Endothelial cell of umbilical vein (primary cell): ENCODE measurements at regions of chr22 and their contacts with region 1.

Region 1: DNA sequence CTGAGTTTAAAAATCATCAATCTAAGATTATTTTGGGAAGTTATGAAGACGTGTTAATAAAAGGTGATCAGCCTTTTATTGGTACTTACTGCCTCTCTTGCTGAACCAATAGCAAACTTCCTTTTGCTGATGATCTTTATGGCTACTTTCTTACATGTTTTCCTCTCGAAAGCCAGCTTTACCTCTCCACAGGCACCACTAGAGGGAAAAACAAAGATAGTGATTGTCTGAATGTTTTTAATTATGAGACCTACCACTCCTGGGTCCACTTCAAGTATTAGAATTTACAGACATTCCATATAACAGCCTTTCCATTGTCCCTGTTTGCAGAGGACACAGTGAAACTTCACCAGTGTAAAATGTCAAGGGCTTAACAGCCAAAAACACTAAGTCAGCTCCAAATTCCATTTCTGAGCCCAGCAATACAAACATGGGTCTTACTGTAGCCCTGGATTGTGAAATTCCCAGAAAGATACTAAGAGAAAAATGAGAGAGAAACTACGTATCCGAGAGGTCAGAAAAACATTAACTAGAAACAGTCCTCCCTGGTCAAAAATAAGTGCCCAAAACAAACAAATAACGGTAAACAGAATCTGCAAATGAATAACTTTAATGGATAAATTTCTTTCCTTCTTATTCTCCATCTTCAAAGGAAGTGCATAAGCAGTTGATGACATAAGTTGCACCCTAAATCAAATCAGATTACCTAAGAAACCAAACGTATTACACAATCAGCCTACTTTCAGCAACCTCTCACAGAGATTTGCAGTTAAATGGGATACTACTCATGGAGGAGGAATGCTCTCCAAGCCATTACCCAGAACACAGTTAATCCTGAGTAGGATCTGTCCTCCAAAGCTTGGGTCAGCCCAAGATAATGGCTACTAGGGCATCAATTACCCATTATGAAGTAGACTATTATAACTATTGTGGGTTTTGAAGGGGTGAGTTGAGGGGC is 29.5 kb downstream of the CHEK2 start:
- DNase-seq: peak; percentile 55
- H3K4me3 ChIP-seq: no peak overlapping the region
- H3K27ac ChIP-seq: peak overlapping the region; percentile 96
- H3K4me1 ChIP-seq: peaks cover 35% of the 10 kb centered on the region
- H3K27me3 ChIP-seq: no peaks in the 10 kb centered on the region
- CTCF ChIP-seq: no peak
- POLR2A ChIP-seq: no peak

Region 2: DNA sequence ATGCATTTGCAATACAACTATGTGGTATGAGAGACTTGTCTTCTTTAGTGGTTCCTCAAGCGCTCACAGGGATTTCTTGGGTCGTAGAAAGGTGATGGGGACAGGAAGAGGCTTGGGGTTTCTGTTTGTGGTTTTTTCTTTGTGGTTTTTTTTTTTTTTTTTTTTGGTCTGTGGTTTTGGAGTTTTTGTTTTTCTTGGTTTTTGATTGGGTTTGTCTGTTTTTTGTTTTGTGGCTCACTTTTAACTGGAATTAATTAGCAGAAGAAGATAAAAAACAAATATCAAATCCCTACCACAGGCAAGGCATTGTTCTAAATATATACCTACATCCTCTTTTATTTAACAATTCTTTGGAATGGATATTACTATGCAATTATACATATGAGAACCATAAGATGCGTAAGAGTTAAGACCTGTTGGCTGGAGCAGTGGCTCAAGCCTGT is 38.0 kb before region 1 on chr22:
- CTCF ChIA-PET with region 1: interaction called, 4 read pairs
- POLR2A ChIA-PET with region 1: no interaction called
- dilution Hi-C with region 1: no loop called
- intact Hi-C with region 1: loop called (anchors 1 kb)
- DNase-seq: no peak
- H3K4me3 ChIP-seq: no peak overlapping the region
- H3K27ac ChIP-seq: no peak overlapping the region
- H3K4me1 ChIP-seq: peaks cover 2% of the 10 kb centered on the region
- H3K27me3 ChIP-seq: no peaks in the 10 kb centered on the region
- CTCF ChIP-seq: no peak
- POLR2A ChIP-seq: no peak

Region 3: DNA sequence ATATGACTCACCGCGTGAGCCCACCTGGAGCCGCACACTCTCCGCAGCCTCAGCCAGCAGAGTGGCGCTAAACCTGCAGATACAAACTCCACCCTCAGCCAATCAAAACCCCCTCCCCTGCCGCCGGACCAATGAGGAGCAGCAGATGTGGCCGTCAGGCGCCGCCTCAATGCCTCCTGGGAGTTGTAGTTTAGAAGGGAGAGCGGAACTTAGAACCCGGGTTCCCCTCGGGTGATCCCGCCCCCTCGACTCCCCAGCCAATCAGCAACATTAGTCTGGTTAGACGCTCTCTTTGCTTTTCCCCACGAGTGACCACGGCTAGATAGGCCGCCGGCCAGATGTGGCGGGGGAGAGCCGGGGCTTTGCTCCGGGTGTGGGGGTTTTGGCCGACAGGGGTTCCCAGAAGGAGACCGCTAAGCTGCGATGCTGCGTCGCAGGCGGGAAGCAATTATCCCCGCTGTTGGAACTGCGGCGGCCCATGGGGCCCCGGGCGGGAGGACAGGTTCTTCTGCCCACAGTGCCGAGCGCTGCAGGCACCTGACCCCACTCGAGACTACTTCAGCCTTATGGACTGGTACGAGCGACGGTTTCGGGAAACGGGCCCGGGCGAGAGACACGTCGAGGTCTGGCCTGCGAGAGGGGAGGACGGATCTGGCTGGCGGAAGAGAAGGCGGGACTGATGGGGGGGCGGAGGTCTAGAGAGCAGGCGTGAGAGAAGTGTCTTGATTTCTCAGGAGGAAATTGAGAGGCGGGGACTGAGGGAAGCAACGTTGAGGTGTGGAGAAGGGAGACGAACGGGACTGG is 29.9 kb after region 1 on chr22 and contains the starts of genes CHEK2 and HSCB:
- CTCF ChIA-PET with region 1: interaction called, 4 read pairs
- POLR2A ChIA-PET with region 1: no interaction called
- dilution Hi-C with region 1: no loop called
- intact Hi-C with region 1: loop called (anchors 1 kb)
- DNase-seq: peak; percentile 99
- H3K4me3 ChIP-seq: peak within 1 kb of the TSS; percentile 75 to 87 (median 77)
- H3K27ac ChIP-seq: peak within 1 kb of the TSS; percentile 84
- H3K4me1 ChIP-seq: peaks cover 12% of the 10 kb centered on the region
- H3K27me3 ChIP-seq: no peaks in the 10 kb centered on the region
- CTCF ChIP-seq: peak in 1 of 2 donors; percentile 11
- POLR2A ChIP-seq: no peak
- total RNA-seq, gene CHEK2: 24.6 and 27.4 TPM in 2 replicates
- total RNA-seq, gene HSCB: 14.1 and 20.3 TPM in 2 replicates

Region 4: DNA sequence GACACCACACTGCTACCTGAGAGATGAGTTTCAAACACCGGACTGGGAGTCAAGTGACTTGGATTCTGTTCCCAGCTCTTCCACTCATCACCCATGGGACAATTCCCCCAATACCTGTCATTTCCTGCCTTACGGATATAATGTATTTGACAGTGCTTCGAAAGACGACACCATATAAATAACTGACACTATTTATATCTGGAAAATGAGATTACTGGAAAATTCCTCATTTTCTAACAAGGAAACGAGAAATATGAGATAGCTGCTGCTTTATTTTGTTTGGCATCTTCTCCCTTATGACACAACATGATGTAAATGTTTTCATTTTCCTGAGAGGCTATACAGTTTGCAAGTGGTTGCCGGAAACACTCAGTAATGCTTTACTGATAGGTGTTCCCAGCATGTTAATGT is 38.4 kb after region 1 on chr22:
- CTCF ChIA-PET with region 1: interaction called, 6 read pairs
- POLR2A ChIA-PET with region 1: no interaction called
- dilution Hi-C with region 1: no loop called
- intact Hi-C with region 1: loop called (anchors 1 kb)
- DNase-seq: peak; percentile 96
- H3K4me3 ChIP-seq: peak overlapping the region in 1 of 3 experiments; percentile 9
- H3K27ac ChIP-seq: peak overlapping the region; percentile 73
- H3K4me1 ChIP-seq: peaks cover 20% of the 10 kb centered on the region
- H3K27me3 ChIP-seq: no peaks in the 10 kb centered on the region
- CTCF ChIP-seq: no peak
- POLR2A ChIP-seq: no peak

Region 5: DNA sequence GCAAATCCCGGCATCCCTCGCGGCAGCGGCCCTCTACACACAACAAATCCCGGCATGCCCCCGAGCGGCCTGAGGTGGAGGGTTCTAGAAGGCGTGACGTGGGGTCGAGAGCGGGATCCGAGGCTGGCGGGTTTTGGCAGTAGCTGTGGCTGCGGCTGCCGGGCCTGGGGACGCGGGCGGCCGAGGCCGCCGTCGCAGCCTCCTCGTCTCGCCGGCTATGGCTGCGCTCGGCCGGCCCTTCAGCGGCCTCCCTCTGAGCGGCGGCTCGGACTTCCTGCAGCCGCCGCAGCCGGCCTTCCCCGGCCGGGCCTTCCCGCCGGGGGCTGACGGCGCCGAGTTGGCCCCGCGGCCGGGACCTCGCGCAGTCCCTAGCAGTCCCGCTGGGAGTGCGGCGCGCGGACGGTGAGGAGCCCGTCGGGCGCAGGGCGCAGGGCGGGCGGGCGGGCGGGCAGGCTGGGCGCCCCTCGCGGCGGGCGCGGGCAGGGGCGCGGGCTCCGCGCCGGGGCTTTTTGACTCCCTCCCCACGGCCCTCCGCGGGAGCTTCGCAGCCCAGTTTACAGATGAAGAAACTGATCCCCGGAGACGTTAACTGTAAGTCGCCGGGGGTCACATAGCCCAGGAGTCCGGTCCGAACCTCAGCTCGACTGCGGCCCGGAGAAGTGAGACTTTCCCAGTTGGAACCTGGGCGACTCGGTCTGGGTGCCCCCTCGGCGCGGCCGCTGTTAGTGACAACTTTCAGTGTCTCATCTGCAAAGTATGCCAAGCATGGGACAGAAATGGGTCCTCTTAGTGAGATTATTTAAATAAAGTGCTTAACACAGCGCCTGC is 60.7 kb after region 1 on chr22 and contains the start of gene CCDC117:
- CTCF ChIA-PET with region 1: interaction called, 4 read pairs
- POLR2A ChIA-PET with region 1: no interaction called
- dilution Hi-C with region 1: no loop called
- intact Hi-C with region 1: loop called (anchors 1 kb)
- DNase-seq: peak; percentile 94
- H3K4me3 ChIP-seq: peak within 1 kb of the TSS; percentile 31 to 85 (median 51)
- H3K27ac ChIP-seq: peak within 1 kb of the TSS; percentile 79
- H3K4me1 ChIP-seq: peaks cover 4% of the 10 kb centered on the region
- H3K27me3 ChIP-seq: no peaks in the 10 kb centered on the region
- CTCF ChIP-seq: peak; percentile 28 to 37
- POLR2A ChIP-seq: peak; percentile 93
- total RNA-seq, gene CCDC117: 22.8 and 23.3 TPM in 2 replicates

Region 6: GRCh38 chr22:28817919-28818909 is 106.1 kb after region 1 on chr22:
- CTCF ChIA-PET with region 1: no interaction called
- POLR2A ChIA-PET with region 1: no interaction called
- dilution Hi-C with region 1: no loop called
- intact Hi-C with region 1: no loop called
- DNase-seq: no peak
- H3K4me3 ChIP-seq: no peak overlapping the region
- H3K27ac ChIP-seq: no peak overlapping the region
- H3K4me1 ChIP-seq: no peaks in the 10 kb centered on the region
- H3K27me3 ChIP-seq: no peaks in the 10 kb centered on the region
- CTCF ChIP-seq: no peak
- POLR2A ChIP-seq: no peak

Region 7: GRCh38 chr22:28855355-28856094 is 143.4 kb after region 1 on chr22:
- CTCF ChIA-PET with region 1: no interaction called
- POLR2A ChIA-PET with region 1: no interaction called
- dilution Hi-C with region 1: no loop called
- intact Hi-C with region 1: no loop called
- DNase-seq: peak; percentile 80
- H3K4me3 ChIP-seq: no peak overlapping the region
- H3K27ac ChIP-seq: no peak overlapping the region
- H3K4me1 ChIP-seq: no peaks in the 10 kb centered on the region
- H3K27me3 ChIP-seq: no peaks in the 10 kb centered on the region
- CTCF ChIP-seq: peak; percentile 74 to 79
- POLR2A ChIP-seq: no peak

Region 8: DNA sequence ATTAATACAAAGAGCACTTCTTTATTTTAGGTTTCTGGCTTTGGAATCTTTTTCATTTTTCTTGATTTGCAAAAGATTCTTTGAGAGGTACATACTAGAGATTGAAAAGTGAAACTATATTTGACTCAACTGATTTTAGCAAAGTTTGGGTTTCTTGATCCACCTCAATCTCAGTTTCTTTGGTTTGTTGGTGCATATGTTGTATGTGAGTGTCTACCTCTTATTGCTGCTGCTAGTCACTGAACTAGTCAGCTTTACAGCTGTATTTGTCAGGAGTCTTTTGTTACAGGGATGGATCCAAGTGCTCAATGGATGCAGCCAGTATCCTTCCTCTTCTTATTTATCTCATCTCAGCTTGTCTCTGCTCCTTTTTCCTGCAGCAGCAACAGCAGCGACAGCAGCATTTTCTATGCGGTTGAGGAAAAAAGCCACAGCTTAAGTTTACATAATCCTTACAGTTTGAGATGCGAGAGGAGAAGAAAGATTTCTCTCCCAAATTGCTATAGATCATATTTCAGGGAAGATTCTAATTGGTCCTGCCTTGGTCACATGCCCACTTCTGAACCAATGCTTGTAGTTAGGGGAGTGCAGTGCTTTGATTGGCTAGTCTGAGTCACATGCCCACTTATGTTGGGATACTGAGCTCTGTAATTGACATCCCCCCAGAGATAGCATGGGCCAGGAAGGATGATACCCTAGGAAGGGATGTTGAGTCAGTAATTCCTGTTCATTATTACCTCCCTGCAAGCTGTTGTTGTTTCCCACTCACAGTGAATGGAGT is 161.3 kb after region 1 on chr22:
- CTCF ChIA-PET with region 1: no interaction called
- POLR2A ChIA-PET with region 1: no interaction called
- dilution Hi-C with region 1: no loop called
- intact Hi-C with region 1: no loop called
- DNase-seq: no peak
- H3K4me3 ChIP-seq: no peak overlapping the region
- H3K27ac ChIP-seq: no peak overlapping the region
- H3K4me1 ChIP-seq: no peaks in the 10 kb centered on the region
- H3K27me3 ChIP-seq: no peaks in the 10 kb centered on the region
- CTCF ChIP-seq: no peak
- POLR2A ChIP-seq: no peak